ENCODE measurements at regions of chr4 and their contacts with region 1.

Region 1: DNA sequence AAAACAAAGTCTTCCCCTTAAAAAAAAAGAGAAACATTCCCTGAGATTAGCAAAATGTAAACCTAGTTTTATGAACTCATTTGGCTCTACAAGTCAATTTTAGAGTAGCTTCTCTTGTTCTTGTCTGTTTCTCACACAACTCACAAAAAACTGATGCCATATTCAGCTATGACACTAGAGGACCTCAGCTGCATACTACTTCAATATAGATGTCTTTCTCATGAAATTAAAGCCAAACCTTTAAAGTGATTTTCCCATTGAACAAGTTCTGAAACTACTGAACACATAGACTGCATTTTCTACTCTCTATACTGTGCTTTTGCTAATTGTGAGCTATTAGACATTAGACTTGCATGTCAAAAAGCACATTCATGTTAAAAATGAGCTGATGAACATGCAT is 49.8 kb downstream of the TBCK start:
- DNase-seq: peak in 1 of 2 experiments; percentile 57
- H3K4me3 ChIP-seq: no peak overlapping the region
- H3K4me3 Mint-ChIP-seq: no peak overlapping the region
- H3K27ac Mint-ChIP-seq: no peak overlapping the region
- H3K4me1 ChIP-seq: peaks cover 69% of the 10 kb centered on the region
- H3K4me1 Mint-ChIP-seq: peaks cover 42% of the 10 kb centered on the region
- H3K27me3 ChIP-seq: no peaks in the 10 kb centered on the region
- H3K27me3 Mint-ChIP-seq: no peaks in the 10 kb centered on the region
- CTCF ChIP-seq: peak; percentile 43 to 60

Region 2: DNA sequence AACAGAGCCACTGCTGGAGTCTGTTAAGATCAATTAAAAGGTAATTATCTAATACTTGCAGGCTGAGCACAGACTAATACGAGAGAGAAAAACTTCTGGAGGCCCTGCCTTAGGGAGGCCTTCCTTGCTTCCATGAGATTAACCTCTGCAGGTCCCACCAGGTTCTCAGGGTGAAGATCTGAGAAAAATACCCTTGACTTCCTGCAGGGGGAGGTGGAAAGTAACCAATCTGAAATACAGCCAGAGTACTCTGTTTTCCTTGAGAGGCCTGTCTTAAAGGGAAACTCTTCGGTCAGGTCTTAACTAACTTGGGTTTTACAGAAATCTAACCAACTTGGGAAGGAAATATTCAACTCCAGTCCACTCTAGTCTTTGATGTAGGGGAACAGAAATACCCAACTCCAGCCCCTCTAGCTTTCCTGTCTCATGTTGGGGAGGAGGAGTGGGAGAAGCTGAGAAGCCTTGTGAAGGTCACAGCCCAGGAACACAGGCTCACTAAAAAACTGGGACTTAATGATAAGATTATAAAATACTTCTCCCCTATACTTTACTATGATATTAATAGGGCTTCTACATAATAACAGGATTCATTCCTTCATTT is 27.3 kb before region 1 on chr4:
- CTCF ChIA-PET with region 1: interaction called, 3 read pairs
- POLR2A ChIA-PET with region 1: no interaction called
- intact Hi-C with region 1: loop called (anchors 1 kb)
- DNase-seq: peak; percentile 50 to 70
- H3K4me3 ChIP-seq: no peak overlapping the region
- H3K4me3 Mint-ChIP-seq: no peak overlapping the region
- H3K27ac Mint-ChIP-seq: peak overlapping the region; percentile 12
- H3K4me1 ChIP-seq: no peaks in the 10 kb centered on the region; the same call in 1 of the 2 replicates
- H3K4me1 Mint-ChIP-seq: peaks cover 14% of the 10 kb centered on the region
- H3K27me3 ChIP-seq: no peaks in the 10 kb centered on the region
- H3K27me3 Mint-ChIP-seq: no peaks in the 10 kb centered on the region
- CTCF ChIP-seq: peak; percentile 74 to 81

Region 3: DNA sequence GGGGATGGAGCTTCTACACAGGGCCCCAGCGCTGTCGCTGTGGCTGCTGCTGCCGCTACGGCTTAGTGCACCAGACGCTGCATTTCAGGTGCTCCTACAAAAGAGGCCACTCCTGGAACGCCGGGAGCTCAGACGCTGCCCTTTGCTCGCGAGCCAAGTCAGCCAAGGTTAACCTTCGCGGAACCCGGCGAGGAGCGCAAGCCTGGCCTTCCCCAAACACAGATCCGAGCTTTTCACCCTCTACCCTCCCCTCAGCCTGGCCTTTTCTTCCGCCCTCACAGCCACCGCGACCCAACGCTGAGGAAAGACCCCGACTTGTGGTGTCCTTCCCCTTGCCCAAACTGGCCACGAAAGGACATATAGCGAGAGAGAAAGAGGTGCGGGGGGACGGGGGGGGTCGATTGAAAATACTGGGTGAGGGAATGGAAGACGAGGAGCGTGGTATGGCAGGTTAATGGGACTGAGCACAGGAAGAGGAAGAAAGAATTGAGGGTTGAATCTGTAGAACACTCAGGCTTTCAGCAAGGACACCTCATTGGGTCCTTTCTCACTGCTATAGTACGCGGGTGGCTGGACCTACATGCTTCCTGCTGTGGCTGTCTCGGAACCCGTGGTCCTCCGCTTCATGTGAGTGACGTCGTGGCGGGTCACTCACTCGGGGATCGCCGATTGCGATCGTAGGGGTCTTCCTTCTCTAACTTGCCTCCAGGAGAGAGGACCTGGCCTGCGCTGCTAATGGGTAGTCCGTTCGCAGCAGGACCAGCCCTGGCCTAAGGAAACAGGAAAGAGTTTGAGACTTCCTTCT is 50.0 kb after region 1 on chr4 and contains the starts of genes AIMP1 and TBCK:
- CTCF ChIA-PET with region 1: interaction called, 8 read pairs
- POLR2A ChIA-PET with region 1: interaction called, 4 read pairs
- intact Hi-C with region 1: loop called (anchors 1 kb)
- DNase-seq: peak; percentile 88 to 91
- H3K4me3 ChIP-seq: peak within 1 kb of the TSS; percentile 75
- H3K4me3 Mint-ChIP-seq: no peak within 1 kb of the TSS
- H3K27ac Mint-ChIP-seq: no peak within 1 kb of the TSS
- H3K4me1 ChIP-seq: peaks cover 38% of the 10 kb centered on the region
- H3K4me1 Mint-ChIP-seq: peaks cover 11% of the 10 kb centered on the region
- H3K27me3 ChIP-seq: no peaks in the 10 kb centered on the region
- H3K27me3 Mint-ChIP-seq: no peaks in the 10 kb centered on the region
- CTCF ChIP-seq: no peak
- total RNA-seq, gene AIMP1: 130 and 143 TPM in 2 replicates
- total RNA-seq, gene TBCK: 51.1 and 58.7 TPM in 2 replicates

Region 4: DNA sequence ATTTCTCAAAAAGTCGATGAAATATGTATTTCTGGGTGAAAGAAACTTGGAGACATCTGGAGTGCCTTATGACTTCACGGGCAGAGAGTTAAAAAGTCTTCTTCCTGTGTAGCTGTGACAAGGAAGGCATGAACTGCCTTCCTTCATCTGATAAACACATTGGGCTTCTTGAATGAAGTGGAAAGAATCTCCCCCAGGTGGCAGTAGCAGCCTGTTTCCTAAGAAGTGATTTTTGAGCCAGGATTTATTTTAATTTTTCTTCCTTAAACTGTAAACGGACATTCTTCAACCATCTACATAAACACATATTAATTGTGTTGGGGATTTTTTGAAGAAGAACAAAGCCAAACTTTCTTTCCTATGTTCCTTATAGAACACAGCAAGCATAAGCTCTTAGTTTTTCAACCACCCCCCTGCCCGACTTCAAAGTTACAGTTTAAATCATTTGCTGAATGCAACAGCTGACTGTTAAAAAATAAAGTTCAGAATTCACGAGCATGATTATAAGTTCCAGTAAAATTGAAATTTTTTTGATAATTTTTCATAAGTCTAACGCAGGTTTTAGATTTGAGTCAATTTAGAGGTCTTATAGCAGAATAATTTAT is 103.4 kb after region 1 on chr4:
- CTCF ChIA-PET with region 1: interaction called, 13 read pairs
- POLR2A ChIA-PET with region 1: interaction called, 3 read pairs
- intact Hi-C with region 1: loop called (anchors 1 kb)
- DNase-seq: peak; percentile 62 to 67
- H3K4me3 ChIP-seq: no peak overlapping the region
- H3K4me3 Mint-ChIP-seq: no peak overlapping the region
- H3K27ac Mint-ChIP-seq: peak overlapping the region; percentile 64
- H3K4me1 ChIP-seq: peaks cover 23% of the 10 kb centered on the region
- H3K4me1 Mint-ChIP-seq: peaks cover 14% of the 10 kb centered on the region
- H3K27me3 ChIP-seq: no peaks in the 10 kb centered on the region
- H3K27me3 Mint-ChIP-seq: no peaks in the 10 kb centered on the region
- CTCF ChIP-seq: peak; percentile 65 to 80

Region 5: DNA sequence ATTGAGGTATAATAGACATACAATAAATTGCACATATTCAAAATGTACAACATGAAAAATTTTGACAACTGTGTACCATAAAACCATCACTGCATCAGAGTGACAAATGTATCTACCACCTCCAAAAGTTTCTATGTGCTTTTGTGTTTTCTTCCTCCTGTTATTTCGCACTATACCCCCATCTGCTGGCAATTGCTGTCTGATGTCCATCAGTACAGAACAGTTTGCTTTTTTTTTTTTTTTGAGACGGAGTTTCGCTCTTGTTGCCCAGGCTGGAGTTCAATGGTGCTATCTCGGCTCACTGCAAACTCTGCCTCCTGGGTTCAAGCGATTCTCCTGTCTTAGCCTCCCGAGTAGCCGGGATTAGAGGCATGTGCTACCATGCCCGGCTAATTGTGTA is 256.6 kb after region 1 on chr4:
- CTCF ChIA-PET with region 1: no interaction called
- POLR2A ChIA-PET with region 1: no interaction called
- intact Hi-C with region 1: loop called (anchors 5 kb)
- DNase-seq: peak; percentile 43 to 54
- H3K4me3 ChIP-seq: no peak overlapping the region
- H3K4me3 Mint-ChIP-seq: no peak overlapping the region
- H3K27ac Mint-ChIP-seq: no peak overlapping the region
- H3K4me1 ChIP-seq: no peaks in the 10 kb centered on the region
- H3K4me1 Mint-ChIP-seq: no peaks in the 10 kb centered on the region
- H3K27me3 ChIP-seq: no peaks in the 10 kb centered on the region
- H3K27me3 Mint-ChIP-seq: no peaks in the 10 kb centered on the region
- CTCF ChIP-seq: peak; percentile 23 to 37

Region 6: DNA sequence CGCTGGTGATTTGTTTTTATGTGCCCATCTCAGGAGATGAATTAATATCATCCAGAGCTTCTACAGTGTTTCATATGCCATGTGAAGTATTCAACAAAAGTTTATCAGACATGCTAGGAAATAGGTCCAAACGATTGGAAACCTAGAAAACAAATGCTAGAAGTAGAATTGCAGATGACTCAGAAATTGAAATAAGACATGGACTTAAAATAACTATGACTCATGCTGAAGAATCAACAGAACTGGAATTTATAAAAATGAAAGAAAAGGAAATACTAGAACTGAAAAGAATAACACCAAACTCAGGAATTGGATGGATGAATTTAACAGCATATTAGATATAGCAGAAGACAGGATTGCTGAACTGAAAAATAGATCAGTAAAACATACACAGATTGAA is 275.1 kb after region 1 on chr4:
- CTCF ChIA-PET with region 1: no interaction called
- POLR2A ChIA-PET with region 1: no interaction called
- intact Hi-C with region 1: no loop called
- DNase-seq: no peak
- H3K4me3 ChIP-seq: no peak overlapping the region
- H3K4me3 Mint-ChIP-seq: no peak overlapping the region
- H3K27ac Mint-ChIP-seq: no peak overlapping the region
- H3K4me1 ChIP-seq: peaks cover 6% of the 10 kb centered on the region; the same call in 1 of the 2 replicates
- H3K4me1 Mint-ChIP-seq: peaks cover 15% of the 10 kb centered on the region
- H3K27me3 ChIP-seq: no peaks in the 10 kb centered on the region
- H3K27me3 Mint-ChIP-seq: no peaks in the 10 kb centered on the region
- CTCF ChIP-seq: no peak

Region 7: DNA sequence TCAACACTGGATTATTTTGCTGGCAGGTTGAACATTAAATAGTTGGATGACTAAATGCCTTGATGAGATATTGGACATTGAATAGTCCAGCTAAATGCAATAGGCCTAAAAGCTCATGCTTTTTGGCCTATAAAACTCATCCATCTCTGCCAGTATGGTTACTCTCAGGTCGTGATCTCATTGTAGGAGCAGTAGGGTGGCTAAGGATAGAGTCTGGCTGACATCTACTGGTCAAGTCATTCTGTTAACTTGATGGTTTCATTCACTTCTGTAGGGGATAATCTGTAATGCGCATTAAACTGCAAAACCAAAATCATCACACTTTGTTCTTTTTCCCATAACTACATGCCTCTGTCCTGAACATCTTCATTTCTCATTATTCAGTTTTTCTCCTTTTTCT is 542.9 kb after region 1 on chr4:
- CTCF ChIA-PET with region 1: no interaction called
- POLR2A ChIA-PET with region 1: no interaction called
- intact Hi-C with region 1: loop called (anchors 1 kb)
- DNase-seq: peak; percentile 40
- H3K4me3 ChIP-seq: no peak overlapping the region
- H3K4me3 Mint-ChIP-seq: no peak overlapping the region
- H3K27ac Mint-ChIP-seq: no peak overlapping the region
- H3K4me1 ChIP-seq: peaks cover 8% of the 10 kb centered on the region
- H3K4me1 Mint-ChIP-seq: peaks cover 13% of the 10 kb centered on the region
- H3K27me3 ChIP-seq: no peaks in the 10 kb centered on the region
- H3K27me3 Mint-ChIP-seq: no peaks in the 10 kb centered on the region
- CTCF ChIP-seq: peak; percentile 34 to 43

Measured in Caco-2 (cell line).